Mammary epithelial cell (primary cell): ENCODE measurements at regions of chr10 and their contacts with region 1.

Region 1: GRCh38 chr10:87842776-87843497 is 20.4 kb downstream of the KLLN start:
- DNase-seq: peak; percentile 92
- H3K4me3 ChIP-seq: no peak overlapping the region
- H3K27ac ChIP-seq: peak overlapping the region; percentile 60
- H3K4me1 ChIP-seq: peaks cover 47% of the 10 kb centered on the region
- H3K27me3 ChIP-seq: no peaks in the 10 kb centered on the region
- CTCF ChIP-seq: peak in 1 of 2 donors; percentile 30

Region 2: DNA sequence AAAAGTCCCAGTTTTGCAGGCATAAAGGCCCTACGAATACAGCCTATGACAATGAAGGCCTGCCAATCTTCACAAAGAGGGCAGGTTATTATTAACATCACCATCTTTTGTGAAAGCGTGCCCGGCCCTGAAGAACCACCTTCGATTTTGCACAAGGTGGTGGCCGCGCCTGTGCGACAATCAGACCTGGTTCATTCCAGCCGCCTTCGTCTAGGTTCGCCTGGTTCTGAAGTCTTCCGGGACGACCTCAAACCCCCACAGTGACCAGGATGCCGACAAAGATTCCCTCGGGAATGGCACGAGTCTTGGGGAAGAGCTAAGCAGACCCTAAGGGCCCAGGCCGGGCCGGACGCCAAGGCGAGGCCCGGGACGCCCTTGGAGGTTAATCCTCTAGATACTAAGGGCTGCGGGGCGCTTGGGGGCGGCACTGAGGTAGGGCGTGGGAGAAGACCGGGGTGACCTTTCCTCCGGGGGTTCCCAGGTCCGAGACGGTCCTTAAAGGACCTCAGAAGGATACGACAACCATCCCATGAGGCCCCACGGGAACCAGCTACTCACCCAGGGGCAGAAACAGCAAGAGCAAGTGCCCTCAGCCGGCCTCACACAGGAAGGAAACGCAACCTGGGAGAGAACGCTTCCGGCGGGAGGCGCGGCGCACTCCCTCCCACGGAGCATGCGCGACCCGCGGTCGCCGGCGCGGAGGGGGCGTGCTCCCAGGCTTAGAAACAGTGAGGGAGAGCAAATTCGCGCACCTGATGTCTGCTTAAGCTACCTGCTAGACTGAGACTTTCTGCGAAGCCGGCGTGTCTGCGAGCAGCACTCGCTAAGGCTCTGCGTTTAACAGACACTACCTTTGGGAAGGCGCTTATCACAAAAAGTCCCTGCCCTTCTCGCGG is 25.1 kb before region 1 on chr10 and contains the start of gene ATAD1:
- CTCF ChIA-PET with region 1: interaction called, 11 read pairs
- dilution Hi-C with region 1: no loop called
- in situ Hi-C with region 1: no loop called
- intact Hi-C with region 1: loop called (anchors 1 kb)
- DNase-seq: peak; percentile 90
- H3K4me3 ChIP-seq: peak within 1 kb of the TSS; percentile 67 to 85 (median 83)
- H3K27ac ChIP-seq: peak within 1 kb of the TSS; percentile 77
- H3K4me1 ChIP-seq: peaks cover 5% of the 10 kb centered on the region
- H3K27me3 ChIP-seq: no peaks in the 10 kb centered on the region
- CTCF ChIP-seq: peak in 1 of 2 donors; percentile 41
- total RNA-seq, gene ATAD1: 57.5 to 73.7 TPM

Region 3: DNA sequence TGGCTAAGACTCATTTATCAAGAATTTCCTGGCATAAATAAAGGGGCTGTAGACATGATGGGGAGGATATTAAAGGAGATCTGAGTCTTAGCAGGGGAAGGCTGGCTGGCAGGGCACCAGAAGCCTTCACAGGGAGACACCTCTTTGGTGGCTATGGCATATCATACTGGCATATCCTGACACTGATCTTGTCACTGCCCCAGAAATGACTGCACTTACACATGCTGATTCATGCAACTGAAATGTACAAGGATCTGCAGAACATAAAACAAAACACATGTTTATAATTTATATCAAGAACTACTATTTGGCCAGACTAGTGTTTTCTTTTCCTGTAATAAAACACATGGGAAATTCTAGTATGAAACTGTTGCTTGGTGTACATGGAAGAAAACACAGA is 911.4 kb after region 1 on chr10:
- CTCF ChIA-PET with region 1: no interaction called
- dilution Hi-C with region 1: no loop called
- in situ Hi-C with region 1: no loop called
- intact Hi-C with region 1: no loop called
- DNase-seq: no peak
- H3K4me3 ChIP-seq: no peak overlapping the region
- H3K27ac ChIP-seq: no peak overlapping the region
- H3K4me1 ChIP-seq: peaks cover 5% of the 10 kb centered on the region
- H3K27me3 ChIP-seq: no peaks in the 10 kb centered on the region
- CTCF ChIP-seq: no peak